ENCODE measurements at regions of chr6 and their contacts with region 1.

Region 1: DNA sequence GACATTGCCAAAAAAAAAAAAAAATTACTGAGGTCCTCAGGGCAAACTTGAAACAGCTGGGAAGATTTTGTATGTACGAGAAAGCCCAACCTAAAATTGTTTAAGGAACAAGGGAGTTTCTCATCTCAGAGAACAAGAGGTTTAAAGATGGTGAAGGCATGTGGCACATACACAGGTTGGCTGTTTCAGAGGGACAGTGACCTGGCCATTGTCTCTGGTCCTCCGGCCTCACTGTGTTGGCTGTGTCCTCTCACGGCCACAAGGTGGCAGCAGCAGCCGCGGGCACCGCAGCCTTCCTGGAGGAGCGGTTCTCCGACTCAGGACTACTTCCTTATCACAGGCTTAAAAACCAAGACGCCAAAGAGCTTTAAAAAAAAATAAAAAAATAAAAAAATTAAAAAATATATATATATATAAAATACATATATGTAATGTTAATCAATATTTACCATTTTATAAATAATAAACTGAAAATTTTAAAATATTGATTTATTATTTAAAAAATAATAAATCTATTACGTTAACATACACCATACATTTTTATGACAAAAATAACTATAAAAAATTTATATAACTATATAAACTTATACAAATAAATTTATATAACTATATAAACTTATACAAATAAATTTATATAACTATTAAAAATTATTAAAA is 52.8 kb downstream of the GTF2H5 start:
- DNase-seq: peak; percentile 82
- ATAC-seq: peak; percentile 99
- H3K4me3 Mint-ChIP-seq: no peak overlapping the region
- H3K27ac Mint-ChIP-seq: no peak overlapping the region
- H3K4me1 Mint-ChIP-seq: no peaks in the 10 kb centered on the region
- H3K27me3 Mint-ChIP-seq: no peaks in the 10 kb centered on the region
- CTCF ChIP-seq: peak; percentile 94

Region 2: DNA sequence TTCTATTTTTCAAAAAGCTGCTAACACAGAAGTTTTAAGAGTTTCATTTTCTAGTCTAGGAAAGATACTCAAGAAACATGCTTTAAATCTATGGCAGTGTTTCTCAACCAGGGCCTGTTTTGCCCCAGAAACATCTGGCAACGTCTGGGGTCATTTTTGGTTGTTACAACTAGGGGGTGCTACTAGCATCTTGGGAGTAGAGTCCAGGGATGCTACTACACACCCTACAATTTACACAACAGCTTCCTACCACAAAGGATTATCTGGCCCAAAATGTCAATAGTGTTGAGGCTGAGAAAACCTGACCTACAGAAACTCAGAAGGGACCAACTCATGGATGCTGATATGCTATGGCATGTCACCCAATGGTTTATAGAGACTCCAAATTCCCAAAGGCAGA is 77.2 kb before region 1 on chr6:
- CTCF ChIA-PET with region 1: no interaction called
- POLR2A ChIA-PET with region 1: no interaction called
- intact Hi-C with region 1: no loop called
- DNase-seq: no peak
- ATAC-seq: peak; percentile 39
- H3K4me3 Mint-ChIP-seq: no peak overlapping the region
- H3K27ac Mint-ChIP-seq: no peak overlapping the region
- H3K4me1 Mint-ChIP-seq: no peaks in the 10 kb centered on the region
- H3K27me3 Mint-ChIP-seq: no peaks in the 10 kb centered on the region
- CTCF ChIP-seq: peak; percentile 58

Region 3: GRCh38 chr6:158207422-158207788 is 13.5 kb before region 1 on chr6:
- CTCF ChIA-PET with region 1: interaction called, 33 read pairs
- POLR2A ChIA-PET with region 1: no interaction called
- intact Hi-C with region 1: no loop called
- DNase-seq: peak; percentile 56
- ATAC-seq: peak; percentile 96
- H3K4me3 Mint-ChIP-seq: peak overlapping the region; percentile 24
- H3K27ac Mint-ChIP-seq: peak overlapping the region; percentile 81
- H3K4me1 Mint-ChIP-seq: peaks cover 33% of the 10 kb centered on the region
- H3K27me3 Mint-ChIP-seq: peaks cover 5% of the 10 kb centered on the region
- CTCF ChIP-seq: no peak

Region 4: DNA sequence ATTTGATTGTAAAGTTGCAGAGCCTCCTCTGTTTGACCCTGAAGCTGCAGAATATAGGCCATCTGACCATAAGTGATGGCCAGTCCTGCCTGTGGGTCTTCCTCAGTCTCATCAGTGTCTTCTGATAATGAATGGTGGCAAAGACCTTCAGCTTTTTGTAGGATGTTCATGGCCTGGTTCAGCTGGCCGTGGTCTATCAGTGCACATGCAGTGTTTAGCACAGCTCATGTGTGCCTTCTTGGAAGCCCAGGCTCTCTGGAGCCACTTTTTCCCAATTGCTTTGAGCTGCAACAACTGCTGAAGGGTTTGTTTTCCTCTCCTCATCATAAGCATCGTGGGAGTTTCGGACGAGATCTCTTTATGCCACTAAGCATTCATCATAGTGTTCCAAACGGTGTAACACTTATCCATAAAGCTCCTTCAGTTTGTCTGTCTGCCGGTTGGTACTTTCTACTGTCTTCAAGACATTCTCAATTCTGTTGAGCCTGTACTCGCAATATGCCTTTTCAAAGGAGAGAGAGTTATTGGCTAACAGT is 21.2 kb after region 1 on chr6:
- CTCF ChIA-PET with region 1: interaction called, 19 read pairs
- POLR2A ChIA-PET with region 1: no interaction called
- intact Hi-C with region 1: no loop called
- DNase-seq: no peak
- ATAC-seq: no peak
- H3K4me3 Mint-ChIP-seq: no peak overlapping the region
- H3K27ac Mint-ChIP-seq: peak overlapping the region; percentile 36
- H3K4me1 Mint-ChIP-seq: peaks cover 21% of the 10 kb centered on the region
- H3K27me3 Mint-ChIP-seq: no peaks in the 10 kb centered on the region
- CTCF ChIP-seq: no peak

Region 5: GRCh38 chr6:158290659-158291058 is 69.7 kb after region 1 on chr6:
- CTCF ChIA-PET with region 1: interaction called, 11 read pairs
- POLR2A ChIA-PET with region 1: no interaction called
- intact Hi-C with region 1: no loop called
- DNase-seq: peak; percentile 82
- ATAC-seq: peak; percentile 99
- H3K4me3 Mint-ChIP-seq: peak overlapping the region; percentile 62
- H3K27ac Mint-ChIP-seq: peak overlapping the region; percentile 91
- H3K4me1 Mint-ChIP-seq: peaks cover 38% of the 10 kb centered on the region
- H3K27me3 Mint-ChIP-seq: no peaks in the 10 kb centered on the region
- CTCF ChIP-seq: no peak

Region 6: GRCh38 chr6:158387036-158387435 is 166.1 kb after region 1 on chr6:
- CTCF ChIA-PET with region 1: interaction called, 41 read pairs
- POLR2A ChIA-PET with region 1: no interaction called
- intact Hi-C with region 1: no loop called
- DNase-seq: peak; percentile 22
- ATAC-seq: no peak
- H3K4me3 Mint-ChIP-seq: no peak overlapping the region
- H3K27ac Mint-ChIP-seq: no peak overlapping the region
- H3K4me1 Mint-ChIP-seq: peaks cover 6% of the 10 kb centered on the region
- H3K27me3 Mint-ChIP-seq: no peaks in the 10 kb centered on the region
- CTCF ChIP-seq: peak; percentile 20

Region 7: GRCh38 chr6:158518191-158519127 is 297.5 kb after region 1 on chr6:
- CTCF ChIA-PET with region 1: interaction called, 7 read pairs
- POLR2A ChIA-PET with region 1: no interaction called
- intact Hi-C with region 1: loop called (anchors 5 kb)
- DNase-seq: peak; percentile 66
- ATAC-seq: peak; percentile 89
- H3K4me3 Mint-ChIP-seq: peak overlapping the region; percentile 80
- H3K27ac Mint-ChIP-seq: peak overlapping the region; percentile 55
- H3K4me1 Mint-ChIP-seq: peaks cover 31% of the 10 kb centered on the region
- H3K27me3 Mint-ChIP-seq: peaks cover 36% of the 10 kb centered on the region
- CTCF ChIP-seq: peak; percentile 47

Region 8: DNA sequence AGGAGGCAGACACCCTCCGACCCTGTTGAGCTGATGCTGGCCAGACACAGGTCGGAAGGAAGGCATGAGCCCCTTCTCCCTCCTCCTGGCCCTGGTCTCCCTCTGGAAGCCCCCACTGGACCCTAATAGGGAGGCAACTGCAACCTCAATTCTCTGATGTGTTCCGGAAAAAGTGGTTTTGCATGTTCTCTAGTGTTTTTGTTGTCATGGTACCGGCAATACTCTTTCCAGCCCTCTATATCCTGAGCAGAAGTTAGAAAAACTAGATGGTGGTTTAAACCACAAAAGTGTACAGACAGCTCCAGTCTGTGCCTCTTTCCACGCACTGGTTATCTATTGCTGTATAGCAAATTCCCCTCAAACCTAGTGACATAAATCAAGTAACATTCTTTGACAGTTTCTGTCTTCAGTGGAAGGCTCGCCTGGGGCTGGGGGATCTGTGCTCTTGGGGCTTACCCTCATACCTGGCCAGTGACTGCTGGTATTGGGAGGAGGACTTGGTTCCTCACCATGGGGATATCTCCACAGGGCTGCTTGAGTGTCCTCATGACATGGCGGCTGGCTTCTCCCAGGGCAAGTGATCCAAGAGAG is 466.0 kb after region 1 on chr6:
- CTCF ChIA-PET with region 1: interaction called, 16 read pairs
- POLR2A ChIA-PET with region 1: interaction called, 3 read pairs
- intact Hi-C with region 1: no loop called
- DNase-seq: peak; percentile 49
- ATAC-seq: peak; percentile 87
- H3K4me3 Mint-ChIP-seq: no peak overlapping the region
- H3K27ac Mint-ChIP-seq: peak overlapping the region; percentile 26
- H3K4me1 Mint-ChIP-seq: peaks cover 59% of the 10 kb centered on the region
- H3K27me3 Mint-ChIP-seq: no peaks in the 10 kb centered on the region
- CTCF ChIP-seq: no peak

Measured in activated CD8-positive, alpha-beta T cell treated with anti-CD3 and anti-CD28 coated beads for 36 hours (primary cell).